Adrenal gland (tissue), 19 donors: ENCODE measurements at regions of chr12 and their contacts with region 1.

Region 1: DNA sequence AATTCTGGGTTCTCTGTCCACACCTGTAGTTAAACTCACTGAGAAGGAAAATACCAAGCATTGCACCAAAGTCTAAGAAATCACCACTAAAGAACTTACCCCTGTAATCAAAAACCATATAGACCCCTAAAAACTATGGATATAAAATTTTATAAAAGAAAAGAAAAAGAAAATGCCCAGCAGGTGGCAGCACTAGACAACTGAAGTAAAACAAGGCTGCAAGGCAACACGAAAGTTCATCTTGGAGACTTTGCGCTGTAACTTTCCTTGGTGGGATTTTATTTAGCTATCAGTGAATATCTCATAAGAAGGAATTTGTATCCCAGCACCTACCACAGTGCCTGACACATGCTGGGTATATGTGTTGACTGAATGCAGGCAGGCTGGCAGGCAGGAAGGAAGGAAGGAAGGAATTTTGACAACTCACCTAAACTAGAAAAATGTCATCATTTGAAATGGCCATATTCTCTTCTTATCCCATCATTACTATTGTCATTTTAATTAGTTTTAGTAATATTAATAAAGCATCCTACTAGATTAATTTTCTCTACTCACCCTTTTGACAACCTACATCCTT is 68.2 kb upstream of the ETV6 start:
- DNase-seq: peak; percentile 48 to 86 (median 67)
- H3K4me3 ChIP-seq: no peak overlapping the region
- H3K27ac ChIP-seq: no peak overlapping the region
- H3K4me1 ChIP-seq: peaks cover 0 to 4% of the 10 kb centered on the region in 2 donors
- H3K27me3 ChIP-seq: no peaks in the 10 kb centered on the region
- CTCF ChIP-seq: peak; percentile 59 to 85 (median 74)
- POLR2A ChIP-seq: no peak

Region 2: GRCh38 chr12:11891754-11892386 is 310.6 kb after region 1 on chr12:
- intact Hi-C with region 1: loop called in 1 of 2 experiments (anchors 10 kb)
- DNase-seq: no peak
- H3K4me3 ChIP-seq: no peak overlapping the region
- H3K27ac ChIP-seq: peak overlapping the region in 1 of 5 donors; percentile 8
- H3K4me1 ChIP-seq: peaks cover 0 to 24% of the 10 kb centered on the region in 2 donors
- H3K27me3 ChIP-seq: no peaks in the 10 kb centered on the region
- CTCF ChIP-seq: peak in 4 of 6 experiments; percentile 16 to 49 (median 34)
- POLR2A ChIP-seq: no peak

Region 3: DNA sequence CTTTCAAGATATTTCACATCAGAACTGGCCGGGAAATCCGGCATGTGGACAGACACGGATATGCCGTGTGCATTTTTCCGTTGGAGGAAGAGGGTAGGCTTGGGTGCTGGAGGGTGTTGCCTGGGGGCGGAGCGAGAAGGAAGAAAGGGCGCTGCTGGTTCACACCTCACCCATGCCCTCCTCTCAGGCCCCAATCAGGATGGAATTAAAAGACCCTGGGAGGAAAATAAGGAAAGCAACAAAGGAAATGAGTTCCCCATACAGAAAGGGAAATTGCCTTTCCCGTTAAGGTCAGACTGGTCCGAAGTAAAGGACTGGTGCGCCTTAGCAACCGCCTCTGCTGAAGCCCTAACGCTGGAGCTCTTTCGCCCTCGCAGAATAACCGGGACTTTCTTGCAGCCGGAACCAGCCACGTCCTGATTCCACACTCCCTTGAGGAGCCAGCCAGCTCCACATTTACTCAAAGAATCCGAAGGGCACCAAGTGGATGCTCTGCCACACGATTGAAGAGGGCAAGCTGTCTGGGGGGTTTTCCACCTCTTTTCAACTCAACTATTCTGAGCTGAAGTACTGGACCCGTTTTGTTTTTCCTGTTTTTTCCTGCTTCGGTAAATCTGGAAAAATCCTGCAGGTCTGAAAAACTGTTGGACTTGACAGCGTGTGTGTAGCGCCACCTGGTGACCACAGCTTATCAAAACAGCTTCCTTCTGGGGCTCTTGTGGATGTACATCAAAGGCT is 451.8 kb after region 1 on chr12:
- intact Hi-C with region 1: loop called (anchors 2 to 5 kb)
- DNase-seq: peak; percentile 74 to 92 (median 81)
- H3K4me3 ChIP-seq: peak overlapping the region in 2 of 4 donors; percentile 4 to 52
- H3K27ac ChIP-seq: peak overlapping the region in 2 of 5 donors; percentile 50 to 77
- H3K4me1 ChIP-seq: no peaks in the 10 kb centered on the region
- H3K27me3 ChIP-seq: no peaks in the 10 kb centered on the region
- CTCF ChIP-seq: peak; percentile 52 to 96 (median 92)
- POLR2A ChIP-seq: no peak